ENCODE measurements at regions of chr2 and their contacts with region 1.

Region 1: DNA sequence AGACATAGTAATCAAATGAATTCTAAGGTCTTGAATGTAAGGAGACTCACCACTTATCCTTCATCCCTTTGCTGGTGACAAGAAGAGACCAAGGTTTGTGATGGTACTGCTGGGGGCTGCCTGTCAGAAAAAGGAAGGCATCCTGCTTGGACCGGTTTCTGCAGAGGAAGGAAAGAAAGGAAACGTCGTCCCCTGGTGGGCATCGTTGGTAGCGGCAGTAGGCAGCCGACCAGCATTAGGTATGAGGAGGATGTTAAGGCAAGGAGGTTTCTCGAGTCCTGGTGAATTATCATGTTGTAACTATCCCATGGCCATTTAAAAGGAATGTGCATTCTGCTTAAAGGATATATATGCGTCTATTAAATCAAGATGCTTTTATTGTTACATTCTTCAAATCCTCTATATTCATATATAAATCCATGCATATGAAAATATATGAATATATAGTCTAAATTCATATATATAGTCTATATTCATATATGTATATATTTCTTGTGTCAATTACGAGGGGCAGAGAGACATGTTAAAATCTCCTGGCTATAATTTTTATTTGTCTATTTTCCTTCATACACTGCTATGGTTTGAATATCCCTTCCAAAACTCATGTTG is 94.4 kb upstream of the TGFA start:
- DNase-seq: peak; percentile 61 to 77 (median 70)
- ATAC-seq: peak; percentile 91
- H3K4me3 ChIP-seq: no peak overlapping the region
- H3K27ac ChIP-seq: no peak overlapping the region
- H3K4me1 ChIP-seq: no peaks in the 10 kb centered on the region
- H3K27me3 ChIP-seq: no peaks in the 10 kb centered on the region; a peak in 1 of 5 replicates
- CTCF ChIP-seq: peak; percentile 91 to 97 (median 94)
- EP300 ChIP-seq: no peak
- POLR2A ChIP-seq: no peak
- RAD21 ChIP-seq: peak; percentile 82 to 92

Region 2: GRCh38 chr2:70310899-70311298 is 337.1 kb before region 1 on chr2:
- CTCF ChIA-PET with region 1: no interaction called
- POLR2A ChIA-PET with region 1: no interaction called
- in situ Hi-C with region 1: loop called (anchors 10 kb)
- intact Hi-C with region 1: no loop called
- DNase-seq: no peak
- ATAC-seq: peak; percentile 56; the same call in 2 of the 3 replicates
- H3K4me3 ChIP-seq: no peak overlapping the region
- H3K27ac ChIP-seq: no peak overlapping the region
- H3K4me1 ChIP-seq: peaks cover 0 to 3% of the 10 kb centered on the region in 2 experiments; a peak in 1 of 5 replicates
- H3K27me3 ChIP-seq: peaks cover 9 to 11% of the 10 kb centered on the region in 2 experiments; a peak in 4 of 5 replicates
- CTCF ChIP-seq: no peak
- EP300 ChIP-seq: no peak
- POLR2A ChIP-seq: no peak
- RAD21 ChIP-seq: no peak

Region 3: DNA sequence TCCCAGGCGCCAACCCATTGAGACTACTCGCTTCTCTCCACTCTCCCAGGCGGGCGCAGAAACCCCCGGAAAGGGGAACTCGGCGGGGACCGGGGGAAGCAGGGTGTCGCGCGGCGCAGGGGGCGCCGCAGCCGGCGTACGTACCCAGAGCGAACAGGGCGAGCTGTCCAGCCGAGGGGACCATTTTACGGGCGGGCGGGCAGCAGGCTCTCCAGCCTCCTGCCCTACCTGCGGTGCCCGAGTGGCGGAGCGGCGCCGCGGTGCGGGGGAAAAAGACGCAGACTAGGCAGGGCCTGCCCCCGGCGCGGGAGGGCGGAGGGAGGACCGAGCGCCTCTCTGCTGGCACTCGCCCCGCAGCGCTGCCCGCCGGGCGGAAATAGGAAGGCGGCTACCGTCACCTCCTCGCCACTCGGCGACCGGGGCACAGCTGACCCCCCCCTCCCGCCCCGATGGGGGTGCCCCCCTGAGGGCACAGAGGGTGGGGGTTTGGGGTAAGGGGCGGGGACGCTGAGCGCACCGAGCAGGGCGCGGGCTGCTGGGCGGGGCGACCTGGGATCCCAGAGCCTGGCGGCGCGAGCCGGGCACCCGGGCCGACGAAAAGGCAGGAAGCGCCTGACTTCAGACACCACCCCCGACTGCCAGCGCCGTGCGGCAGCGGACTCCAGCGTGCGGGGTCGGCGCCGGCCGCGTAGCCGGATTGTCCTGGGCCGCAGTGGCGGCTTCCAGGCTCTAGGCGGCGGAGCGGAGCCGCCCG is 94.2 kb before region 1 on chr2 and contains the start of gene TGFA:
- CTCF ChIA-PET with region 1: interaction called, 4 read pairs
- POLR2A ChIA-PET with region 1: interaction called, 3 read pairs
- in situ Hi-C with region 1: no loop called
- intact Hi-C with region 1: loop called (anchors 10 kb)
- DNase-seq: peak; percentile 36 to 61 (median 54)
- ATAC-seq: peak; percentile 98
- H3K4me3 ChIP-seq: 0 out of 2 replicates have a peak within 1 kb of the TSS, but pooled peaks have one; percentile 10
- H3K27ac ChIP-seq: no peak within 1 kb of the TSS
- H3K4me1 ChIP-seq: peaks cover 0 to 15% of the 10 kb centered on the region in 2 experiments; a peak in 2 of 5 replicates
- H3K27me3 ChIP-seq: peaks cover 41 to 57% of the 10 kb centered on the region in 2 experiments
- CTCF ChIP-seq: peak; percentile 64 to 84 (median 71)
- EP300 ChIP-seq: no peak
- POLR2A ChIP-seq: no peak
- RAD21 ChIP-seq: peak in 1 of 2 experiments; percentile 36; a peak in 2 of 4 replicates
- polyA plus RNA-seq, gene TGFA: not detected